ENCODE measurements at regions of chr10 and their contacts with region 1.

Region 1: GRCh38 chr10:133257489-133258065 is 19.1 kb downstream of the ADAM8 start:
- DNase-seq: peak; percentile 58
- H3K4me3 ChIP-seq: no peak overlapping the region
- H3K27ac ChIP-seq: peak overlapping the region; percentile 50
- H3K4me1 ChIP-seq: peaks cover 50% of the 10 kb centered on the region
- H3K27me3 ChIP-seq: no peaks in the 10 kb centered on the region
- CTCF ChIP-seq: peak; percentile 36 to 62

Region 2: GRCh38 chr10:133144771-133145170 is 112.8 kb before region 1 on chr10:
- CTCF ChIA-PET with region 1: no interaction called
- dilution Hi-C with region 1: no loop called
- in situ Hi-C with region 1: no loop called
- intact Hi-C with region 1: loop called (anchors 1 kb)
- DNase-seq: no peak
- H3K4me3 ChIP-seq: no peak overlapping the region
- H3K27ac ChIP-seq: no peak overlapping the region
- H3K4me1 ChIP-seq: no peaks in the 10 kb centered on the region
- H3K27me3 ChIP-seq: peaks cover 2% of the 10 kb centered on the region
- CTCF ChIP-seq: no peak

Region 3: GRCh38 chr10:133274698-133275363 is 17.3 kb after region 1 on chr10:
- CTCF ChIA-PET with region 1: interaction called, 3 read pairs
- dilution Hi-C with region 1: no loop called
- in situ Hi-C with region 1: no loop called
- intact Hi-C with region 1: loop called (anchors 1 kb)
- DNase-seq: peak; percentile 87
- H3K4me3 ChIP-seq: peak overlapping the region in 1 of 3 experiments; percentile 13
- H3K27ac ChIP-seq: peak overlapping the region; percentile 69
- H3K4me1 ChIP-seq: peaks cover 61% of the 10 kb centered on the region
- H3K27me3 ChIP-seq: no peaks in the 10 kb centered on the region
- CTCF ChIP-seq: no peak